ENCODE measurements at regions of chr13 and their contacts with region 1.

Region 1: DNA sequence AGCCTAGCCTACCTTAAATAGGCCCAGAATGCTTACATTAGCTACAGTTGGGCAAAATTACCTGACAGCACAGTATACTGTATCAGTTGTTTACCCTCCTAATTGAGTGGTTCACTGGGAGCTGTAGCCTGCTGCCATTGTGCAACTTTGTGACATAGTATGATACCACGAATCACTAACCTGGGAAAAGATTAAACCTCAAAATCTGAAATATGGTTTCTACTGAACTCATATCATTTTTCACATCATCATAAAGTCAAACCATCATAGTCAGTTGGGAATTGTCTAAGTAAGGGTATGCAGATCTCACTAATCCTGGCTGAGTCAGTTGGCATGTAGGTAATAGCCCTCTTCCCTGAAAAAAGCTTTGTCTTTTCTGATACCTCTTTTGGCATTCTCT is 9.2 kb downstream of the PAN3 start:
- DNase-seq: no peak
- H3K4me3 Mint-ChIP-seq: no peak overlapping the region
- H3K27ac Mint-ChIP-seq: no peak overlapping the region
- H3K4me1 Mint-ChIP-seq: peaks cover 10% of the 10 kb centered on the region
- H3K27me3 Mint-ChIP-seq: no peaks in the 10 kb centered on the region
- CTCF ChIP-seq: no peak

Region 2: GRCh38 chr13:28117689-28118377 is 29.7 kb before region 1 on chr13:
- CTCF ChIA-PET with region 1: no interaction called
- intact Hi-C with region 1: no loop called
- DNase-seq: no peak
- H3K4me3 Mint-ChIP-seq: no peak overlapping the region
- H3K27ac Mint-ChIP-seq: no peak overlapping the region
- H3K4me1 Mint-ChIP-seq: no peaks in the 10 kb centered on the region
- H3K27me3 Mint-ChIP-seq: no peaks in the 10 kb centered on the region
- CTCF ChIP-seq: no peak

Region 3: DNA sequence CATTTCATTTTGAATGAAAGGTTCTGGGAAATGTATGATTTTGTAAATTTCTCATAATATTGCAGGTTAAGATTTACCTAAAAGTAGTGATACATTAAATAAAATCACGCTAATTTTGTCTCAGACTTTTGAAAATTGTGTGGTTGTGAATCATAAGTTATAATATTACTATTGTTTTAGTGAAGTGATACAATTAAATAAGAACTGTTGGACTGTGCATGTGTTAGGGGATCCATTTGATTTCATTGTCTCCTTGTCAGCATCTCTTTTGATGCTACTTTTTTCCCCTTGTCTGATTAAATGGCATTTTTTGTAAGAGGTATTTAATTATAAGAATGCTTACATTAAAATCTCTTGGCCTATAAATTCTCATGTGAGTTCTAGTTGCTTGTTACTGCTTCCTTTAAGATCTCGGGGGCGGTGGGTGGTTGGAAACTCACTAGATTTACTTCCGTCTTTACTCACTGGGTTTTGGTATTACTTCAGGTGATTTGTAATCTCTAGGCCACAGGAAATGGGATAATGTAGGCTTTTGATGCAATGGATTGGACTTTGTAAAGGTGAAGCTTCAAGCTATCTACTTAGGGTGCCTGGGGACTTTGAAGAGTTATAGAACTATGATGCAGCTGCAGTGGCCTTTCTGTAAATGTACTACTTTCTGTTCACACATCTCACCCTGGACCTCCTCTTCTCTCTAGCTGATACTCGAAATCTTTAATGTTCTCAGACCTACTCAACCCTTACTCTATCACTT is 57.4 kb after region 1 on chr13:
- CTCF ChIA-PET with region 1: no interaction called
- intact Hi-C with region 1: loop called (anchors 10 kb)
- DNase-seq: no peak
- H3K4me3 Mint-ChIP-seq: no peak overlapping the region
- H3K27ac Mint-ChIP-seq: no peak overlapping the region
- H3K4me1 Mint-ChIP-seq: no peaks in the 10 kb centered on the region
- H3K27me3 Mint-ChIP-seq: no peaks in the 10 kb centered on the region
- CTCF ChIP-seq: no peak

Measured in Calu3 (cell line).